PC-9 (cell line): ENCODE measurements at regions of chr18 and their contacts with region 1.

Region 1: DNA sequence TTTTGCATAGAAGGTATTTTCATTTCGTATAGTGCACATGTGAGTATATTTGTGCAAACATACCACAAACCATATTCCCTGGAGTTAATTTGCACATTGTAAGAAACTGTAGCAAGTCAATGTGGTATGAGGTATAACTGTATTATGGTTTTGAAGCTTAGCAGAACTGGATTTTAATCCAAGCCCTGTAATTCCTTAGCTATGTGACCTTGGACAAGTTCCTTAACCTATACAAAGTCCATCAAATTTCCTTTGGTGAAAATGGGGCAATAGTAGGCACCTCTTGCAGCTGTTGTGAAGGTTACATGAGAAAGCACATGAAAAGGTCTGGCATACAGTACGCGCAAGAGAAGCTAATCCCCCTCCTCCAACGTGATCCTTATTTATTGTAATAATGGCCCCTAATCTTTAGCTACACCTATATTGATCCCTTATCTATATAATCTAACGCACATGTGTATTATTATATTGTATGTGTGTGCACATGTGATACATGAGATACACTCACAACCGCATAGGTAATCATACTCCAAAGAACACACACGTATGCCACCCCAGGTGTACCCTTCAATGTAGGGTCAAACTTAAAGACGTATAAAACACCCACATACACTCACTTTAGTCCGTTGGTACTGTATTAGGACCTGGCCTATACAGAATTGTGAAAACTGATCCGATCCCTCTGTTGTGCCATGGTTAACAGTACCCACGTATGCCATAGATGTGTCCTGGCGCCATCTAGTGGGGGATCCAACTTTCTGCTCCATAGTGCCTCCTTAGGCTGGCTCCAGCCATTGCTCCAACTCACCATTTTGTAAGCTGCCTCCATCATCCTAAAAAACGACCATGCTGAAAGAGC is 402.9 kb upstream of the SLC14A2 start:
- DNase-seq: peak; percentile 47 to 49
- H3K4me3 ChIP-seq: no peak overlapping the region
- H3K27ac ChIP-seq: no peak overlapping the region
- H3K4me1 ChIP-seq: no peaks in the 10 kb centered on the region
- H3K27me3 ChIP-seq: no peaks in the 10 kb centered on the region
- CTCF ChIP-seq: peak; percentile 85

Region 2: DNA sequence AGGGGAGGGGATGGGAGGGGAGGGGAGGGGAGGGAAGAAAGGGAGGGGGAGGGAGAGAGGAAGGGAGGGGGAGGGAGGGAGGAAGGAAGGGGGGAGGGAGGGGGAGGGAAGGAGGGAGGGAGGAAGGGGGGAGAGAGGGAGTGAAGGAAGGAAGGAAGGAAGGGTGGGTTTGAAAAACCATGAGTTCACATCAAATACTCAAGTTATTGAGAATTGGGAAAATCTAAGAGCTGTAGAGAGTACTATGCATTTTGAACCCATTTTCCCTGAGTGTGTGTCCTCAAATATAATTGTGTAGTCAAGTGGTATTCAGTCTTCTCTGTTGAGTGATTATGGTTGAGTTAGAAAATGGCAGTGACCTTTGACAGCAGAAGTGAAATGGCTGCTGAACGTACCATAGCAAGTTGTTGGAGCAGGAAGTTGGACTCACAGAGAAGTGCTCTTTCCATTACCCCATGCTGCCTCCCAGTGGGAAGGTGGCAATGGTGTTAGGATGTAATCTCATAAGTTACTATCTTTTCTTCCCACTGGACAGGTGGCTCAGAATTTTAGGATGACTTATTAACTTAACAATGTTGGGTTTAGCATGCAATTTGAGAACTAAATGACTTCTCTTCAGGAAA is 317.1 kb before region 1 on chr18:
- CTCF ChIA-PET with region 1: no interaction called
- POLR2A ChIA-PET with region 1: no interaction called
- intact Hi-C with region 1: loop called (anchors 10 kb)
- DNase-seq: peak; percentile 30 to 45
- H3K4me3 ChIP-seq: no peak overlapping the region
- H3K27ac ChIP-seq: no peak overlapping the region
- H3K4me1 ChIP-seq: peaks cover 8% of the 10 kb centered on the region; the same call in 1 of the 2 replicates
- H3K27me3 ChIP-seq: no peaks in the 10 kb centered on the region
- CTCF ChIP-seq: peak; percentile 70

Region 3: GRCh38 chr18:45014047-45014501 is 198.3 kb before region 1 on chr18:
- CTCF ChIA-PET with region 1: no interaction called
- POLR2A ChIA-PET with region 1: no interaction called
- intact Hi-C with region 1: loop called (anchors 10 kb)
- DNase-seq: peak; percentile 41 to 65
- H3K4me3 ChIP-seq: no peak overlapping the region
- H3K27ac ChIP-seq: no peak overlapping the region
- H3K4me1 ChIP-seq: no peaks in the 10 kb centered on the region
- H3K27me3 ChIP-seq: no peaks in the 10 kb centered on the region
- CTCF ChIP-seq: peak; percentile 62

Region 4: GRCh38 chr18:45236676-45237075 is 24.3 kb after region 1 on chr18:
- CTCF ChIA-PET with region 1: no interaction called
- POLR2A ChIA-PET with region 1: no interaction called
- intact Hi-C with region 1: no loop called
- DNase-seq: no peak
- H3K4me3 ChIP-seq: no peak overlapping the region
- H3K27ac ChIP-seq: no peak overlapping the region
- H3K4me1 ChIP-seq: no peaks in the 10 kb centered on the region
- H3K27me3 ChIP-seq: no peaks in the 10 kb centered on the region
- CTCF ChIP-seq: no peak

Region 5: DNA sequence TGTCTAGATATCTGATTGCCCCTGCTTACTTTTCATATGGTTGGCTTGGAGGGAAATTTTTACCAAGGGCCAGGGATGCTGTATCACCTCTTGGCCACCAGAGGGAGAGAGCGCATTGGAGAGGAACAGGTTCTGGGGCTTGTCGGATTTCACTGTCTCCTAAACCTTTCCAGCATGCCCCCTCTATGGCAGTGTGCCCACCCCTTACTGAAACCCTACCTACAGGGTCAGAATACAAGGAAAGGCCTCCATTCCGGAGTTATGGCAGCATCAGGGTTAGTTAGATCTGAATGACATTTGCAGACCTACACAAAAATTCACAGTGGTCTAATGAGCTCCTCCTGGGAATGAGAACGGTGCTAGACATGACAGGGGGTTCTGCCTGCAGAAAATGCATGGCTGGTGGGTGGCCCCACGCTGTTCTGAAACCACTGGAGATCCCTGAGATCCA is 408.7 kb after region 1 on chr18:
- CTCF ChIA-PET with region 1: no interaction called
- POLR2A ChIA-PET with region 1: no interaction called
- intact Hi-C with region 1: no loop called
- DNase-seq: peak in 1 of 2 experiments; percentile 7
- H3K4me3 ChIP-seq: no peak overlapping the region
- H3K27ac ChIP-seq: no peak overlapping the region
- H3K4me1 ChIP-seq: no peaks in the 10 kb centered on the region
- H3K27me3 ChIP-seq: peaks cover 10% of the 10 kb centered on the region
- CTCF ChIP-seq: peak; percentile 94